ENCODE measurements at regions of chr15 and their contacts with region 1.

Region 1: GRCh38 chr15:86915811-86916331 is 836.2 kb downstream of the AGBL1 start:
- DNase-seq: peak in 1 of 2 donors; percentile 20
- ATAC-seq: peak; percentile 65 to 90 (median 76)
- H3K4me3 ChIP-seq: no peak overlapping the region
- H3K27ac ChIP-seq: peak overlapping the region in 4 of 10 donors; percentile 44 to 77 (median 72)
- H3K4me1 ChIP-seq: peaks cover 3 to 27% (median 14%) of the 10 kb centered on the region in 9 donors
- H3K27me3 ChIP-seq: no peaks in the 10 kb centered on the region
- CTCF ChIP-seq: peak in 8 of 9 donors; percentile 17 to 67 (median 55)

Region 2: GRCh38 chr15:86624261-86625036 is 291.4 kb before region 1 on chr15:
- intact Hi-C with region 1: loop called in 1 of 10 experiments (anchors 10 kb)
- DNase-seq: peak; percentile 71 to 75
- ATAC-seq: peak; percentile 96 to 100 (median 98)
- H3K4me3 ChIP-seq: no peak overlapping the region
- H3K27ac ChIP-seq: peak overlapping the region in 5 of 10 donors; percentile 3 to 50 (median 34)
- H3K4me1 ChIP-seq: peaks cover 0 to 11% (median 0%) of the 10 kb centered on the region in 9 donors
- H3K27me3 ChIP-seq: no peaks in the 10 kb centered on the region
- CTCF ChIP-seq: peak; percentile 27 to 66 (median 50)

Region 3: DNA sequence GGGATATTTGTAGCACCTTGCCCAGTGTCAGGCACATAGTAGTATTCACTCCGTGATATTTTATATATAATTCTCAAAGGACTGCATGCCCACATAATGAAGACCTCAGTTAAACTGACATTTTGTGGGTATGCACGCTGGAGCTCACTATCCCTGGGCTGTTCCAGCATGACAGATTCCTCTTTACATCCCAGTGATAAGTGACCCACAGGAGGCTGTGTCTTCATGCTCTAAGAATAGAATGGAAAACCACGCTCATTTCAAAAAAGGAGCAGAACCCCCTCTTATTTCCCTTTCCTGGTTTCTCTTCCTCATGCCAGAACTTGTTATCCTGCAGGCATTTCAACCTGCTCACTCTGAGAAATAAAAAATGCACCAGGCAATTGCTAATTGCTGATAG is 118.7 kb before region 1 on chr15:
- intact Hi-C with region 1: no loop called
- DNase-seq: no peak
- ATAC-seq: no peak
- H3K4me3 ChIP-seq: no peak overlapping the region
- H3K27ac ChIP-seq: no peak overlapping the region
- H3K4me1 ChIP-seq: no peaks in the 10 kb centered on the region
- H3K27me3 ChIP-seq: no peaks in the 10 kb centered on the region
- CTCF ChIP-seq: no peak

Region 4: DNA sequence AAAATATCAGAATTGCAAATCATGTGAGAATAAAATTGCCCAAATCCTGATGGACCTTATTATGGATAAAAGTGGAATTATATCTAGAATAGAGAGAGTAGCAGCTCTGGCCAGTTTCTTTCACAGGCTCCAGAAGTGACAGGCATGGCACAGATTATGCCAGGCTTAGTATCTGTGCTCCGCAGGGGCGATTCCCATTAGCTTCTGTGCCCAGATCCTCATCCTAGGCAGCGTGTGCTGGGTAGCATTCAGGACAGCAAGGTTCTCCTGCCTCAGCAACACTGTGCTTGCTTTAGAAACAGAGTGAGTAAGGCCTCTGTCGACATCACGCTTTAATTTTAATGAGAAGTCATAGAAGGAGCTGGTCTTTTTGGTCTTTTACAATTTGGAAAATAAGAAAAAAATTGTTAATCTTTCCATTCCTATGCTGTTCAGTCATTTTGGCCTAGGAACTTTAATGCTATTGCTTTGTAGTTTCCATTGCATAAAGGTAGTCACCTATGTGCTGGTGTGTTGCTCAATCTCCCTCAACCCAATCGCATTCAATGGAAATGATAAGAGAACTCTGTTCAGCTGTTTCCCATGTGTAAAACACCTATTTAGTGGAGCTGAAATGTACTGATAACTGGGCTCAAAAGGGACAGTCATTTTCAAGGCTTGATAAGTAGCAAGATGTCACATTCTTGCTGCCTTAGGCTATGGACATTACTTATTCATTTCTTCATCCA is 66.1 kb before region 1 on chr15:
- intact Hi-C with region 1: no loop called
- DNase-seq: peak; percentile 16 to 57
- ATAC-seq: peak; percentile 88 to 98 (median 95)
- H3K4me3 ChIP-seq: no peak overlapping the region
- H3K27ac ChIP-seq: peak overlapping the region in 7 of 10 donors; percentile 11 to 69 (median 52)
- H3K4me1 ChIP-seq: peaks cover 0 to 25% (median 15%) of the 10 kb centered on the region in 9 donors
- H3K27me3 ChIP-seq: no peaks in the 10 kb centered on the region
- CTCF ChIP-seq: no peak

Region 5: GRCh38 chr15:86942285-86942684 is 26.4 kb after region 1 on chr15:
- intact Hi-C with region 1: no loop called
- DNase-seq: no peak
- ATAC-seq: no peak
- H3K4me3 ChIP-seq: no peak overlapping the region
- H3K27ac ChIP-seq: no peak overlapping the region
- H3K4me1 ChIP-seq: no peaks in the 10 kb centered on the region
- H3K27me3 ChIP-seq: no peaks in the 10 kb centered on the region
- CTCF ChIP-seq: no peak

Region 6: GRCh38 chr15:87604857-87605446 is 689.1 kb after region 1 on chr15:
- intact Hi-C with region 1: loop called in 2 of 10 experiments (anchors 10 kb)
- DNase-seq: no peak
- ATAC-seq: no peak
- H3K4me3 ChIP-seq: no peak overlapping the region
- H3K27ac ChIP-seq: no peak overlapping the region
- H3K4me1 ChIP-seq: peaks cover 0 to 14% (median 6%) of the 10 kb centered on the region in 9 donors
- H3K27me3 ChIP-seq: no peaks in the 10 kb centered on the region
- CTCF ChIP-seq: peak in 8 of 9 donors; percentile 15 to 59 (median 48)

Region 7: DNA sequence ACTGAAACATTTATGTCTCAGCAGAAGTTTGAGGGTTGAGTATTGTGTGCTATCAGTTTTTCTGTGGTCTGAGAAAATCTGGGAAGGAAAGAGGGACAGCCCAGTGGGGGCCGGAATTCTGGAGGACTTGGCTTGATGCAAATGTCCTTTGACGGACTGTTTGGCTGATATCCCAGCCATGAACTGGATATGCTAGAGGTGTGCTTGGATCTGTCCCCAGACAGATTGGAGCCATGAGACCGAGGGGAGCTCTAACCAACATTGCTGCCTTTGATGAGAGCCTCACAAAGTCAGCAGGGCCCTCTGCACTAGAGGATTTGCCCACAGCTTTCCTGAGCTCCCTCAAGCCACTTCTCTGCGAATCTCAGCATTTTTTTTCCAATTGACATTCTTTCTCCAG is 935.0 kb after region 1 on chr15:
- intact Hi-C with region 1: loop called in 1 of 10 experiments (anchors 5 kb)
- DNase-seq: peak; percentile 16 to 33
- ATAC-seq: peak; percentile 67 to 96 (median 89)
- H3K4me3 ChIP-seq: no peak overlapping the region
- H3K27ac ChIP-seq: peak overlapping the region in 7 of 10 donors; percentile 4 to 79 (median 52)
- H3K4me1 ChIP-seq: peaks cover 0 to 16% (median 0%) of the 10 kb centered on the region in 9 donors
- H3K27me3 ChIP-seq: no peaks in the 10 kb centered on the region
- CTCF ChIP-seq: no peak

Region 8: DNA sequence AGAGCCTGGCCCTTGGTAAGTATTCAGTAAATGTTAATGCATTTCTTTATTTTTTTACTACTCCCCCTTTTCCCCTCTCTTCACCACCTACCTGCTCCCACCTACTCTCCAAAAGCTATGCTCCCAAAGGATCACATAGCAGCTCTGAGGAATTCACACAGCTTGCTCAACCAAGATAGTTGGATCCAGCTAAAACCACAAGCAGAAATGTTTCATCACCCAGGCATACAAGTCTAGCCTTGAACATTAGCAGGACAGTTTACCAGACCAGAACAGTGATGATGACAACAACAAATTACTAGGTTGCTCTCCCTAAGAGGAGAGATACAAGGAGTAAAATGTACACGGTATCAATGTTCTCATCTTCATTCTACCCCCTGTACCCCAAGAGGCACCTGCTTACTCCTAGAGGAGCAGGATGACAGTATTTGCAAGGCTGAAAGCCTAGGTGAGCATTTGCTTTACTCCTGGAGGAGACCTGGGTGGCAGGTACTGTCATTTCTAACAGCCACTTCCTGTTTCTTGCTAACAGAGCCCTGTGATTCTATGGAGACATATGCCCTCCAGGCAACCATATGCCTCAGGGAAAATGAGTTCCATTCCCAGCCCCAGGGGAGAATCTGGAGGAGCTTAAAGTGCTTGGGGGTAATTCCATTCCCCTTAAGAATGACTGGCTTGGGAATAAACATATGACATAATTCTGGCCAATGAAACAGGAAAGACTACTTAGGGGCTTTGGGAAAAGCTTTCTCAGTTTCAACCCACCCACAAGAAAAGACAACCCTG is 1103.2 kb after region 1 on chr15:
- intact Hi-C with region 1: loop called in 1 of 10 experiments (anchors 5 kb)
- DNase-seq: no peak
- ATAC-seq: no peak
- H3K4me3 ChIP-seq: no peak overlapping the region
- H3K27ac ChIP-seq: no peak overlapping the region
- H3K4me1 ChIP-seq: peaks cover 0 to 3% (median 0%) of the 10 kb centered on the region in 9 donors
- H3K27me3 ChIP-seq: peaks cover 0 to 8% (median 0%) of the 10 kb centered on the region in 7 donors
- CTCF ChIP-seq: no peak

Region 9: GRCh38 chr15:88246666-88247446 is 1331.0 kb after region 1 on chr15:
- intact Hi-C with region 1: loop called in 7 of 10 experiments (anchors 2 to 10 kb)
- DNase-seq: peak; percentile 66 to 78
- ATAC-seq: peak; percentile 78 to 91 (median 84)
- H3K4me3 ChIP-seq: peak overlapping the region in 1 of 10 donors; percentile 13
- H3K27ac ChIP-seq: no peak overlapping the region
- H3K4me1 ChIP-seq: peaks cover 0 to 19% (median 8%) of the 10 kb centered on the region in 9 donors
- H3K27me3 ChIP-seq: peaks cover 0 to 16% (median 3%) of the 10 kb centered on the region in 7 donors
- CTCF ChIP-seq: peak; percentile 87 to 97 (median 96)

Region 10: DNA sequence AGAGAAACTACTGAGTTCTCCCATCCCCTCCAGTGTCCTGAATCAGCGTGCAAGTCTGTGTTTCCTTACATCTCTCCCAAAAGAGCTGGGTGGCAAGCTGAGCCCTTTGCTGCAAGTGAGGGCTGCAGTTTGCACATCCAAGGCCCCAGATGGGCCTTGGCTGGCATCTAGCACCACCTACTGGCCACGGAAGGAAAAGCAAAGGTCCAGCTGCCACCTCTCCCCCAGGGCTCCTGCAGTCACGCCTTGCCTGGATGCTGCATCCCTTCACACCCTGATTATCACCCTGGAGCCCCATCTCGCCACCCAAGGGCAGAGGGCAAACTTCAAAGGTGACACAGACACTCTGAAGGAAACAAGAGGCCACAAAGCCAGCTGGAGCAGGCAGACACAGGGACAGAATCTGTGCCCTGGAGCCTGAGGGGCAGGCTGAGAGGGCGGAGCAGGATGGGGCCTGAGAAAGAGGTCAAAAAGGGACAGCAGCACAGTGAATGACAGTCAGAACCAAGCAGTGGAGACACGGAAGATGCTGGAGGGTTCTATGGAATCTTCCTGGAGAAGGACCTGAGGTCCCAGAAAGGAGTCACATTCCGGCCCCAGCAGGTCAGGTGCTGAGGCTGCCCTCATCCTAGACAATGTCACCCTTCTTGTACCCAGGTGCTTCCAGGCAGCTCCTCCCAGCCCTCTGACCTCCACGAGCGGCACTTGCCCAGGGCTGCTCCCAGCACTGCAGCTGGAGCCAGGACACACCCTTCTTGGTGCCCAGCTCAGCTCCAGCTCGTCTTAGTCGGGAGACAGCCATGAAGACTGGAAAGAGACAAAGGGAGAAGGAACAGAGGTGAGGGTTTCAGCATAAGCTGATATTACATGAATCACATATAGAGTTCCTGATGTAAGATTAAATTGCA is 1358.9 kb after region 1 on chr15:
- intact Hi-C with region 1: loop called in 2 of 10 experiments (anchors 10 kb)
- DNase-seq: peak; percentile 43 to 59
- ATAC-seq: peak in 7 of 8 donors; percentile 52 to 82 (median 71)
- H3K4me3 ChIP-seq: no peak overlapping the region
- H3K27ac ChIP-seq: no peak overlapping the region
- H3K4me1 ChIP-seq: no peaks in the 10 kb centered on the region
- H3K27me3 ChIP-seq: peaks cover 0 to 39% (median 13%) of the 10 kb centered on the region in 7 donors
- CTCF ChIP-seq: peak; percentile 61 to 85 (median 81)